ENCODE measurements at regions of chr11 and their contacts with region 1.

Region 1: GRCh38 chr11:128884703-128885338 is 6.3 kb upstream of the KCNJ5 start:
- DNase-seq: peak in 1 of 2 donors; percentile 50
- ATAC-seq: peak; percentile 93

Region 2: DNA sequence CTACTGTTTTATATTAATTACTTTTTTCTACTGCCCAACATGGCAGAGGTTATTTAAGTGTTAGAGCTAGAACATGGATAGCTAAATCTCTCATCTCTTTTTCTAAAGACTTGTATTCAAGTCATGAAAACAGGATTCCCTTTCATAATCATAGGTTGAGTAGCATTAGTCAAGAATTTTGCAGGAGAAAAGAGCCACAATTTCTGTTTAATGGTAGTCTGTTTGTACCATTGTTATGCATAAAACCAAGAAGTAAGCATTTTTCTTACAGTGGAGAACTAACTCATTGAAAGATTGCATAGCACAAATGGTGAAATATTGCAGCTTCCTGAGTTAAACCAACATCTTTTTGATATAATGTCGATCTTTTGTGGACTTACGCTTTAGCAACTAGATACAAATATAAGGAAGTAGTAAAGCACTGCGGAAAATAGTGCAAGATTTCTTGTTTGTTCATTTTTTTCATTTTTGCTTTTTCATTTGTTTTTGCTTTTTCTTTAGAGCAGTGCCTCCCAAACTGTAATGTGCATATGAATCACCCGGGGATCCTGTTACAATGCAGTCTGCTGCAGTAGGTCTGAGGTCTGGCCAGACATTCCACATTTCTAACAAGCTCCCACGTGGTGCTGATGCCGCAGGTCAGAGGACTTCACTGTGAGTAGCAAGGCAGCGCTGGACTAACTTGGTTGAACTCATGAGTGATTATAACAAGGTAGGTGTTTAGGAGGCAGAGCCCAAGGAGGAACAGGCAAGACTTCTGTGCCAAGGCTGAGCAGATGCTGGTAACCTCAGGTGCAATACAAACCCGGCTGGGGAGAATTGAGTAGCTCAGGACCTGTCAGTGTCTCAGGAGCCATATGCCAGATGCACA is 302.1 kb before region 1 on chr11:
- intact Hi-C with region 1: no loop called
- DNase-seq: no peak
- ATAC-seq: no peak

Region 3: GRCh38 chr11:128779036-128779435 is 105.8 kb before region 1 on chr11:
- intact Hi-C with region 1: no loop called
- DNase-seq: no peak
- ATAC-seq: no peak

Region 4: GRCh38 chr11:128956401-128957201 is 71.8 kb after region 1 on chr11:
- intact Hi-C with region 1: loop called in 1 of 2 experiments (anchors 2 kb)
- DNase-seq: no peak
- ATAC-seq: peak; percentile 84

Region 5: GRCh38 chr11:129061466-129062194 is 176.8 kb after region 1 on chr11:
- intact Hi-C with region 1: no loop called
- DNase-seq: no peak
- ATAC-seq: no peak

Region 6: GRCh38 chr11:129331871-129332274 is 447.1 kb after region 1 on chr11:
- intact Hi-C with region 1: loop called in 1 of 2 experiments (anchors 5 kb)
- DNase-seq: peak; percentile 74 to 89
- ATAC-seq: peak; percentile 96

Measured in left colon (tissue), 2 donors.